PC-9 (cell line): ENCODE measurements at regions of chr5 and their contacts with region 1.

Region 1: GRCh38 chr5:24804221-24804681 is 159.5 kb upstream of the CDH10 start:
- DNase-seq: peak; percentile 61 to 66
- H3K4me3 ChIP-seq: no peak overlapping the region
- H3K27ac ChIP-seq: 0 out of 2 replicates have a peak overlapping the region, but pooled peaks have one; percentile 9
- H3K4me1 ChIP-seq: no peaks in the 10 kb centered on the region; the same call in 1 of the 2 replicates
- H3K27me3 ChIP-seq: no peaks in the 10 kb centered on the region
- CTCF ChIP-seq: no peak

Region 2: DNA sequence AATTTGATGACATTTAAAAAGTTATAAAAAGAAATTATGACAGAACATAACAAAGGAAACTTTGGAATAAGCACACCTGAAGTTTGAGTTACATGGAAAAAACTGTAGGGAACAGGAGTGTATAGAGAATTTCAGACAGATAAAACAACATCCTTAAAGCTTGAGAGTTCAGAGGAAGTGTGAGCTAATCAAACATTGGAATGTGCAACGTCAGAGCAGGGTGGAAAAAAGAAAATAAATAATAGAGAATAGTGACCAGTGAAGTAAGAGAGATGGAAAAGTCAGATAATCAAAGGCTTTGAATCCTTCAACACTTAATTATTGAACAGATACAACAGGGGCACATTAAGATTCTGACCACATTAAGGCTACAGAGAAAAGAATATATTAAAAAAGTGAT is 31.0 kb before region 1 on chr5:
- CTCF ChIA-PET with region 1: no interaction called
- POLR2A ChIA-PET with region 1: interaction called, 21 read pairs
- intact Hi-C with region 1: no loop called
- DNase-seq: no peak
- H3K4me3 ChIP-seq: no peak overlapping the region
- H3K27ac ChIP-seq: no peak overlapping the region
- H3K4me1 ChIP-seq: no peaks in the 10 kb centered on the region
- H3K27me3 ChIP-seq: no peaks in the 10 kb centered on the region
- CTCF ChIP-seq: no peak

Region 3: GRCh38 chr5:24823625-24824024 is 19.4 kb after region 1 on chr5:
- CTCF ChIA-PET with region 1: no interaction called
- POLR2A ChIA-PET with region 1: no interaction called
- intact Hi-C with region 1: loop called (anchors 1 kb)
- DNase-seq: peak; percentile 70 to 95
- H3K4me3 ChIP-seq: no peak overlapping the region
- H3K27ac ChIP-seq: no peak overlapping the region
- H3K4me1 ChIP-seq: no peaks in the 10 kb centered on the region
- H3K27me3 ChIP-seq: no peaks in the 10 kb centered on the region
- CTCF ChIP-seq: no peak

Region 4: GRCh38 chr5:25405850-25406249 is 601.6 kb after region 1 on chr5:
- CTCF ChIA-PET with region 1: no interaction called
- POLR2A ChIA-PET with region 1: no interaction called
- intact Hi-C with region 1: no loop called
- DNase-seq: no peak
- H3K4me3 ChIP-seq: no peak overlapping the region
- H3K27ac ChIP-seq: no peak overlapping the region
- H3K4me1 ChIP-seq: no peaks in the 10 kb centered on the region
- H3K27me3 ChIP-seq: no peaks in the 10 kb centered on the region
- CTCF ChIP-seq: no peak